ENCODE measurements at regions of chr10 and their contacts with region 1.

Region 1: DNA sequence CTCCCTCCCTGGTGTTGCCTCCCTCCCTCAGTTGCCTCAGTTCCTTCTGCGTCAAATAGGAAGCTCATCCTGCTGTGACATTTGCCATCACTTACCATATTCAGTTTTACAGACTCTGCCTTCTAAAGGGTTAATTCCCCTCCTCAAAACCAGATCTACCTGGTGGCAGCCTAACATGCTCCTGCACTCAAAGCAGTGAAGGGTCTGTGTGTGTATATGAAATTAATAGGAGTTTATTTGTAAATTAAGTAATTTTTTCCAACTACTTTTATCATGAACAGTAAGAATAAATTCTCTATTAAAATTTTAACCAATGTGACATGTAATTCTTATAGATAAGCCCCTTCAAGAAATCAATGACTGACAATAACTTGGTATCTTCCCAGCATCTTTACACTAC is 158.6 kb upstream of the INSYN2A start:
- DNase-seq: no peak
- H3K4me3 ChIP-seq: no peak overlapping the region
- H3K27ac ChIP-seq: no peak overlapping the region
- H3K27me3 ChIP-seq: no peaks in the 10 kb centered on the region
- CTCF ChIP-seq: peak; percentile 67

Region 2: DNA sequence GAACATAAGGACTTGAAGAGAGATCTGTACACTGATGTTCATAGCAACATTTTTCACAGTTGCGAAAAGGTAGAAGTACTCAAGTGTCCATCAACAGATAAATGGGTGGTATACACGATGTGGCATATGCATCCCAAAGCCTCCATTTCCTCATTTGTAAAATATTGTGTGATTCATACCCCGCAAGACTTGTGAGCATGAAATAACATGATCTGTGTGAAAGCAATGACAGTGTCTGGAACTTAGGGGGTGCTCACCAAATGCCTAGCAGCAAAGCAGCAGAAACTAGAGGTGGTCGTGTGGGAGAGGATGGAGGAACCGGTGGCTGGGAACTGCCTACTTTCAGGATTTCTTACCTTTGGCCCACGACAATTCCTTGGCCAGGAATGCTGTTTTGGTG is 23.3 kb before region 1 on chr10:
- CTCF ChIA-PET with region 1: no interaction called
- POLR2A ChIA-PET with region 1: no interaction called
- DNase-seq: no peak
- H3K4me3 ChIP-seq: no peak overlapping the region
- H3K27ac ChIP-seq: no peak overlapping the region
- H3K27me3 ChIP-seq: no peaks in the 10 kb centered on the region
- CTCF ChIP-seq: no peak

Region 3: GRCh38 chr10:127343821-127344220 is 11.2 kb before region 1 on chr10:
- CTCF ChIA-PET with region 1: interaction called, 17 read pairs
- POLR2A ChIA-PET with region 1: no interaction called
- DNase-seq: no peak
- H3K4me3 ChIP-seq: no peak overlapping the region
- H3K27ac ChIP-seq: no peak overlapping the region
- H3K27me3 ChIP-seq: no peaks in the 10 kb centered on the region
- CTCF ChIP-seq: no peak

Region 4: GRCh38 chr10:127368929-127369328 is 13.9 kb after region 1 on chr10:
- CTCF ChIA-PET with region 1: interaction called, 11 read pairs
- POLR2A ChIA-PET with region 1: no interaction called
- DNase-seq: no peak
- H3K4me3 ChIP-seq: no peak overlapping the region
- H3K27ac ChIP-seq: no peak overlapping the region
- H3K27me3 ChIP-seq: no peaks in the 10 kb centered on the region
- CTCF ChIP-seq: no peak

Region 5: DNA sequence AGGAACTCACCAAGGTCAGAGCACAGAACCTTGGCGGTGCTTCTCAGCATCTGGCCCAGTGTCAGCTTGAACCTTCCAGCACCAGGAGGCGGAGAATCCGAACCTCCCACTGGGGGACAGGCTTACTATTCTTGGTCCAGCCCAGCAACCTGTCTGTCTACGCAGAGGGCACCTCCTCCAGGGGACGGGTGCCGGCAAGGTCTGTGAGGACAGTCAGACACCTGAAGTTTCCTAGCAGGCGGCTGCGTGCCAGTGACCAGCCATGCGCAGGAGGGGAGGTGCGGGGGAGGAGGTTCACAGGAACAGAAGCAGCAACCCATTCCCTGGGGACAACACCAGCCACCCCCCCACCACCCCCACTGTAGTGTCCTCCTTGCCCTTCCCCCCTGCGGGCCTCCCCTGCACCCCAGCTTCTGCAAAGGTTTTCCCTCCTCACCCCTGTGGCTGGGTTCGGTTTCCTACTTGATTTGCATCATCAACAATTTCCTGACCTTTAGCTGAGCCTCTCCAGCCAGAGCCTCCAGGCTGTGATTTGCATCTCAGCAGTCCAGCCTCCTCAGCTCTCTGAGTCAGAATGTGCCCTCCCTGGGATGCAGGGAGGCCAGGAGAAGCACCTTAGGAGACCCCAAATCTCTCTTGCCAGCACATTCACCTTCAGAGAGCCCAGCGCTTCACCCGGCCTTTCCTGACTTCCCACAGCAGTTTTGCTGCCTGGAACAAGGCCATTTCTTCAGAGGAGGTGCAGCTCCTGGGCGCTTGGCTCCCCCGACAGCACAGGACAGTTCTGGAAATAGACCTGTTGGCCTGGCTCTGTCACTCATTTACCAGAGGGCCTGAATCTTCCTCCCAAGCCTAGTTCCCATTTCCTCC is 86.6 kb after region 1 on chr10:
- CTCF ChIA-PET with region 1: no interaction called
- POLR2A ChIA-PET with region 1: no interaction called
- DNase-seq: no peak
- H3K4me3 ChIP-seq: no peak overlapping the region
- H3K27ac ChIP-seq: no peak overlapping the region
- H3K27me3 ChIP-seq: no peaks in the 10 kb centered on the region
- CTCF ChIP-seq: no peak

Region 6: DNA sequence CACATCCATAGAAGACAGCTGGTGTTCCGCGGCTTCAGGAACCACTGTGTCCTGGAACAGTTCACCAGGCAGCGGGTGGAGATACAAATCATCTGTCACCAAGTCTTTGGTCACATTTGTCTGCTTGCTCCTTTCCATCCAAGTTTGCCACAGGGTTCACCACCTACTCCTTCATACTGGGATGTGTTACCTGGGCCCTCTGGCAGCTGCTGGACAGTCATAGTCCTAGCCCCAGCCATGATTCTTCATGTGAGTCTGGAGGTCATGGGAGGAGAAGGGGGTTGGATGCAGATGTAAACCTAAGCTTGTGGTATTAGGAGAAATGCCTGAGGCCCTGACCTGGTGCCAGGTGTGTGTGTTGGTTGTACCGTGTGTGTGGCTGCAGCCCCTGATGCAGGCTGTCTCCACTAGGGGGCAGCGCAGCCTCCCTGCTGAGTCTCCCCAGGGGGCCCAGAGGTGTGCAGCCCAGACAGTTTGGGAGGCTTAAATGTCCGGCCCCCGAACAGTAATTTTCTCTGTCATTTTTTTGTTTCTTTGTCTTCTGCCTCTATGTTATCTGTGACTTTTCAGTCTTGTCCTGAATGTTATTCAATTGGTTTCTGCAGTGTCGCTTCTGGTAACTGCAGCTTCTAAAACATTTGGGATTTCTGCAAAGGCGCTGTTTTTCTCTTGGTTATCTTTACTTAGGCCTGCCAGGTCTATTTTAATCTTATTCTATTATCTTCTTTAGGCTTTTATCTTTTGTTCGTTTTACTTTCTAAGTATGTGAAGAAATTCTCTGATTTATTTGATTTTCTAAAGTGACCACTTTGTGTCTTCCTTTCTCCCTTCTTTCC is 208.9 kb after region 1 on chr10:
- CTCF ChIA-PET with region 1: no interaction called
- POLR2A ChIA-PET with region 1: no interaction called
- DNase-seq: no peak
- H3K4me3 ChIP-seq: no peak overlapping the region
- H3K27ac ChIP-seq: no peak overlapping the region
- H3K27me3 ChIP-seq: no peaks in the 10 kb centered on the region
- CTCF ChIP-seq: no peak

Region 7: GRCh38 chr10:127715782-127716378 is 360.9 kb after region 1 on chr10:
- CTCF ChIA-PET with region 1: no interaction called
- POLR2A ChIA-PET with region 1: no interaction called
- DNase-seq: no peak
- H3K4me3 ChIP-seq: no peak overlapping the region
- H3K27ac ChIP-seq: no peak overlapping the region
- H3K27me3 ChIP-seq: no peaks in the 10 kb centered on the region
- CTCF ChIP-seq: no peak

Measured in AG04450 (cell line).